HepG2 (cell line): ENCODE measurements at regions of chr14 and their contacts with region 1.

Region 1: GRCh38 chr14:34539407-34540180 is at the start of gene EAPP:
- DNase-seq: peak; percentile 100
- ATAC-seq: peak; percentile 96
- H3K4me3 ChIP-seq: peak within 1 kb of the TSS; percentile 86 to 99 (median 92)
- H3K27ac ChIP-seq: peak within 1 kb of the TSS; percentile 95
- H3K4me1 ChIP-seq: peaks cover 25% of the 10 kb centered on the region
- H3K27me3 ChIP-seq: peaks cover 0 to 4% of the 10 kb centered on the region in 2 experiments; a peak in 1 of 5 replicates
- CTCF ChIP-seq: peak; percentile 51
- EP300 ChIP-seq: peak; percentile 65 to 77; a peak in 3 of 4 replicates
- POLR2A ChIP-seq: peak; percentile 99
- RAD21 ChIP-seq: peak; percentile 79
- total RNA-seq, gene EAPP: 110 and 163 TPM in 2 replicates

Region 2: DNA sequence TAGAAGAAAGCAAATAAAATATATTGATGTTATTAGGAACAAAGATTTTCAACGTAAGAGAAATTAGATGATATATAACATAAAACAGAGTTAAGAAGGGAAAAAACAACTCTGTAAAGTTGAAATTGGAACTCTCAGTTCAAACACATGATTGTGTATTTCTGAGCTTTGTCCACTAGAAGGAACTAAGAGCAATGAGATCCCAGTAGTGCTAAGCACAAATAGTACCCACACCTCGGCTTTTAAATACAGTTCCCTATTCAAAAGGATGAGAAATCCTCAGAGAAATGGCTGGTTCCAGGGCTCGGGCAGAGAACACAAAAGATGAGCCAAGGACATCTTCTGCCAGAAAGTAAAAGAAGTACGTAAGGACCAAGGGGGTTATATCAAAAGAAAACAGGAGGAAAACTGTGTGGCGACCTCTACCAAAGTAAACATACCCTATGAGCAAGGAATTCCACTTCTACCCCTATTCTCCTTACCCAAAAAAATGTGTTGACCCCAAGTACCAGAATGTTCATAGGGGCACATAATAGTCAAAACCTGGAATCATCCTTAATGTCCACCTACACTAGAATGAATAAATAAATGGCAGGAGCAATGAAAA is 174.2 kb before region 1 on chr14:
- CTCF ChIA-PET with region 1: no interaction called
- POLR2A ChIA-PET with region 1: interaction called, 4 read pairs
- in situ Hi-C with region 1: no loop called
- intact Hi-C with region 1: loop called (anchors 5 kb)
- DNase-seq: peak; percentile 59
- ATAC-seq: peak; percentile 75
- H3K4me3 ChIP-seq: peak overlapping the region in 1 of 3 experiments; percentile 1; a peak in 1 of 6 replicates
- H3K27ac ChIP-seq: no peak overlapping the region
- H3K4me1 ChIP-seq: peaks cover 35% of the 10 kb centered on the region
- H3K27me3 ChIP-seq: peaks cover 0 to 2% of the 10 kb centered on the region in 2 experiments; a peak in 1 of 5 replicates
- CTCF ChIP-seq: peak; percentile 62
- EP300 ChIP-seq: no peak
- POLR2A ChIP-seq: no peak
- RAD21 ChIP-seq: peak; percentile 55; the same call in 1 of the 2 replicates

Region 3: GRCh38 chr14:34554540-34555333 is 15.1 kb after region 1 on chr14:
- CTCF ChIA-PET with region 1: no interaction called
- POLR2A ChIA-PET with region 1: interaction called, 10 read pairs
- in situ Hi-C with region 1: no loop called
- intact Hi-C with region 1: no loop called
- DNase-seq: no peak
- ATAC-seq: no peak
- H3K4me3 ChIP-seq: peak overlapping the region; percentile 0 to 47 (median 20); a peak in 4 of 6 replicates
- H3K27ac ChIP-seq: peak overlapping the region; percentile 37
- H3K4me1 ChIP-seq: peaks cover 14% of the 10 kb centered on the region
- H3K27me3 ChIP-seq: no peaks in the 10 kb centered on the region
- CTCF ChIP-seq: no peak
- EP300 ChIP-seq: no peak
- POLR2A ChIP-seq: peak in 1 of 2 experiments; percentile 64; a peak in 2 of 4 replicates
- RAD21 ChIP-seq: no peak